CD14-positive monocyte (primary cell): ENCODE measurements at regions of chr10 and their contacts with region 1.

Region 1: GRCh38 chr10:3239066-3239919 is 66.7 kb upstream of the PITRM1 start:
- DNase-seq: peak; percentile 17 to 54 (median 32)
- H3K4me3 ChIP-seq: no peak overlapping the region
- H3K4me3 Mint-ChIP-seq: peak overlapping the region in 1 of 2 donors; percentile 75
- H3K27ac ChIP-seq: no peak overlapping the region
- H3K27ac Mint-ChIP-seq: peak overlapping the region in 1 of 7 donors; percentile 57
- H3K4me1 ChIP-seq: peaks cover 6 to 8% of the 10 kb centered on the region in 2 donors
- H3K4me1 Mint-ChIP-seq: peaks cover 9% of the 10 kb centered on the region
- H3K27me3 ChIP-seq: peaks cover 0 to 8% of the 10 kb centered on the region in 2 donors
- H3K27me3 Mint-ChIP-seq: peaks cover 19 to 21% (median 20%) of the 10 kb centered on the region in 3 donors
- CTCF ChIP-seq: peak; percentile 93

Region 2: DNA sequence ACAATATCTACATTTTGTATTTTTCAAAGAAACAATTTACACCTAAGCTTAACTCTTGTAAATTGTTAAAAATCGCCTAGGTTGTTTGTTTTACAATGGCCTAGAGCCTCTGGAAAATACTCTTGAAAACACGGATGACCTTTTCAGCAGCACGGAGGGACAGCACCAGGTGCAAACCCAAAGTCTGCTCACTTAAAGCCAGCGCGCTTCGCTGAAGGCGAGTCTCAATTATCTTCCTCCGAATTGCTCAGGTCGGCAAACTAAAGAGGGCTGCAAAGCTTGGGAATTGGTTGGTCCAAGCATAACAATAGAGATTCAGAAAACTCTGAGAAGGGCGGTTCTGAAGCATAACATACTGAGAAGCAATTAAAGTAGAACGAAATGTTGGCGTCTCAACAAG is 73.1 kb after region 1 on chr10:
- intact Hi-C with region 1: no loop called
- DNase-seq: no peak
- H3K4me3 ChIP-seq: no peak overlapping the region
- H3K4me3 Mint-ChIP-seq: no peak overlapping the region
- H3K27ac ChIP-seq: no peak overlapping the region
- H3K27ac Mint-ChIP-seq: no peak overlapping the region
- H3K4me1 ChIP-seq: no peaks in the 10 kb centered on the region
- H3K4me1 Mint-ChIP-seq: no peaks in the 10 kb centered on the region
- H3K27me3 ChIP-seq: no peaks in the 10 kb centered on the region
- H3K27me3 Mint-ChIP-seq: peaks cover 4 to 12% (median 10%) of the 10 kb centered on the region in 3 donors
- CTCF ChIP-seq: no peak

Region 3: GRCh38 chr10:3330663-3331062 is 91.4 kb after region 1 on chr10:
- intact Hi-C with region 1: no loop called
- DNase-seq: peak in 2 of 3 donors; percentile 82 to 90
- H3K4me3 ChIP-seq: no peak overlapping the region
- H3K4me3 Mint-ChIP-seq: no peak overlapping the region
- H3K27ac ChIP-seq: peak overlapping the region; percentile 37 to 74
- H3K27ac Mint-ChIP-seq: peak overlapping the region in 4 of 7 donors; percentile 79 to 96 (median 85)
- H3K4me1 ChIP-seq: peaks cover 9 to 17% of the 10 kb centered on the region in 2 donors
- H3K4me1 Mint-ChIP-seq: peaks cover 16% of the 10 kb centered on the region
- H3K27me3 ChIP-seq: no peaks in the 10 kb centered on the region
- H3K27me3 Mint-ChIP-seq: peaks cover 2 to 5% (median 2%) of the 10 kb centered on the region in 3 donors
- CTCF ChIP-seq: no peak

Region 4: DNA sequence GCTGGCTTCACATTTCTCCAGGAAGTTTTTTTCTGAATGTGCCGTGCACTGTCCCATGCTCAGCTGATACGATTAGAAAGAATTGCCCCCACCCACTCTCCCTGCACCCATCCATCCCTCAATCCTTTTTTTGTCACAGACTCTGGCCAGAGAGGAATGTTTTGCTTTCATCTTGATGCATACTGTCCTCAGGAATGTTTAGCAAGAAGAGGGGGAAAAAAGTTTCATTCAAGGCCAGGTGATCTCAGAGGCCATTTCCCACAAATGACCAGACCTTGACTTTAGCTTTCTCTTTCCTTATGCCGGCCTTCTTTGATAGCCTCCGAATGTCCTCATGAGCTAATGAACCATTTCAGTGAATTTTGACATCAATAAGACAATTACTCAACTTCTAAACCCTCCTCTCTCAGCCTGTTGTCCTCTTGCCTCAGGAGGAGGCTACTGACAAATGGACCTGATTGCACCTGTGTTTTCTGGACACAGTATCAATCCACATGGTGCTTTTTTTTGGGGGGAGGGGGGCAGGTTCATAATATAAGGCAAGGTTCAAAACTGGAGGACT is 650.7 kb after region 1 on chr10:
- intact Hi-C with region 1: no loop called
- DNase-seq: no peak
- H3K4me3 ChIP-seq: no peak overlapping the region
- H3K4me3 Mint-ChIP-seq: no peak overlapping the region
- H3K27ac ChIP-seq: no peak overlapping the region
- H3K27ac Mint-ChIP-seq: peak overlapping the region in 1 of 7 donors; percentile 80
- H3K4me1 ChIP-seq: peaks cover 32 to 34% of the 10 kb centered on the region in 2 donors
- H3K4me1 Mint-ChIP-seq: peaks cover 25% of the 10 kb centered on the region
- H3K27me3 ChIP-seq: no peaks in the 10 kb centered on the region
- H3K27me3 Mint-ChIP-seq: peaks cover 0 to 1% (median 0%) of the 10 kb centered on the region in 3 donors
- CTCF ChIP-seq: no peak

Region 5: GRCh38 chr10:4656576-4657182 is 1417.4 kb after region 1 on chr10:
- intact Hi-C with region 1: loop called (anchors 1 to 5 kb)
- DNase-seq: peak; percentile 13 to 61 (median 59)
- H3K4me3 ChIP-seq: no peak overlapping the region
- H3K4me3 Mint-ChIP-seq: no peak overlapping the region
- H3K27ac ChIP-seq: no peak overlapping the region
- H3K27ac Mint-ChIP-seq: no peak overlapping the region
- H3K4me1 ChIP-seq: no peaks in the 10 kb centered on the region
- H3K4me1 Mint-ChIP-seq: peaks cover 3% of the 10 kb centered on the region
- H3K27me3 ChIP-seq: peaks cover 0 to 2% of the 10 kb centered on the region in 2 donors
- H3K27me3 Mint-ChIP-seq: peaks cover 3 to 5% (median 3%) of the 10 kb centered on the region in 3 donors
- CTCF ChIP-seq: peak; percentile 93

Region 6: DNA sequence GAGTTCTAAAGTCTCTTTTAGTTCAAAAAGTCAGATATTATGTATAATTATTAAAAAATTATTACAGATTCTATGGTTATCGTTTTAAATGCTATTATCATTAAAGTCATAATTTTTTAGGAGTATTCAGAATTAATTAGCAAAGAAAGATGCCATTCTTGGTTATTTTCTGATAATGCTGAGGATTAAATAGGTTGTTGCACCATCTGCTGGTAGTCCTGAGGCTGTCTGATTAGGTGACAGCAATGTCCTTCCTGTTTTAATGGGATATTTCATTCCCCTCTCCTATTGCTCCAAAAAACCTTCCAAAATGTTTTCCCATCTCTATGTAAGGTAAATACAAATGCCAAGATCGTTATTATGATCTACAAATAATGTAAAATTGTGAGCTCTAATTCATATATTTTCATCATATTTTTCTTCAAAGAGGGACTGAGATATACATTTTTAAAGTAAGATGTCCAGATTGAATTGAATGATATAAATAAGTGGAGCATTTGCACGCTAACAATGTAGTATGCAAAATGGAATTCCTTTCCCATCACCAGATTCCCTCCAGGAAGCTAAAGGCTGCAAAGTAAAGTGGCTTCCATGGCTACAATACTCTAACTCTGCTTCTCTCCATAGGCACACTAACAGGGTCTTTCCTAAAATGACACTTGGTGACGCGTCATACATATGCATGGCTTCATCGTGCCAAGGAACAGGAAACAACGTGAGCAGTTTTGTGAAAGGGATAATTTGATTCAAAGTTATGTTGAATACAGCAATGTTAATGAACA is 1527.9 kb after region 1 on chr10:
- intact Hi-C with region 1: loop called in 1 of 2 experiments (anchors 5 kb)
- DNase-seq: peak in 2 of 3 donors; percentile 26 to 29
- H3K4me3 ChIP-seq: no peak overlapping the region
- H3K4me3 Mint-ChIP-seq: no peak overlapping the region
- H3K27ac ChIP-seq: no peak overlapping the region
- H3K27ac Mint-ChIP-seq: no peak overlapping the region
- H3K4me1 ChIP-seq: peaks cover 9 to 11% of the 10 kb centered on the region in 2 donors
- H3K4me1 Mint-ChIP-seq: peaks cover 13% of the 10 kb centered on the region
- H3K27me3 ChIP-seq: no peaks in the 10 kb centered on the region
- H3K27me3 Mint-ChIP-seq: peaks cover 0 to 4% (median 2%) of the 10 kb centered on the region in 3 donors
- CTCF ChIP-seq: peak; percentile 58